ENCODE measurements at regions of chr10 and their contacts with region 1.

Region 1: GRCh38 chr10:77613476-77614130 is 24.0 kb downstream of the KCNMA1 start:
- DNase-seq: no peak
- CTCF ChIP-seq: no peak

Region 2: DNA sequence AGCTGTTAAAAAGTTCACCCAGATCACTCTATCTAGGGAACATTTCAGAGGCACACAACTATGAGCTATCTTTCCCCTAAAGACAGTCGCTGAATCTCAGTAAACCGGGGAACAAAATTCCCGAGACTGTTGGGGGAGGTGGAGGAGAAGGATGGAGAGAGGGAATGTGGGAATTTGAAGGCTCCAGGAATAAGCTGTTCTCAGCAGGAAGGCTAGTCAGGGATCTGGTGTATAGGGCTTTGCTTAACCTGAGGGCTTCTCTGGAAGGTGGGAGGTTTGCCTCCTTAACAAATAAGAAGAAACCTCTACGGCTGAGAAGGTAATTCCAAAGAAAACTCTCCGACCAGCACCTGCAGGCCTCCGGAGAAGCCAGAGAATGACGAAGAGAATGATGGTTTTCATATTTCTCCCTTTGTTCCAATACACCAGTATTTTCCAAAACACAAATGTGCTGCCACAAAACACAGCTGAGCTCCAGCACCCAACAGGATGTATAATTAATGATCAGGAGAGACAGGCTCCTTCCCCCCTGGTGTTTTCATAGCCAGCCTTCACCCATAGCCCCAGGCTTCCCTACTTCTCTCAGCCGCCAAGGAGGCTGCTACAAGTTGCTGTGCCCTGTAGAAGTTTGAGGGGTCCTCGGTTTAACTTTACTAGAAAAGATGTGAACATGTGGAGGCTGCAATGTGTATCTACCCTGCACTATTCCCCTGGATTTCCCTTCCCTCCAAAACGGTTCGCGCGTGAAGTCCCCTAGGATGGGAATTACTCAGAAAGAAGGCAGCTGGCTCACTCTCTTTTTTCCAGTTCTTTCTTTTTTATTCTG is 22.0 kb after region 1 on chr10:
- CTCF ChIA-PET with region 1: interaction called, 10 read pairs
- POLR2A ChIA-PET with region 1: interaction called, 3 read pairs
- DNase-seq: no peak
- CTCF ChIP-seq: no peak

Measured in GM10248 (cell line).